Activated T-helper 2 cell treated with anti-CD3 and anti-CD28 coated beads, Interferon-gamma antibody, Interleukin-2, Interleukin-4, amounts not matched to agents 10 μg/mL and 5 μg/mL and 100 μg/mL, durations not matched to agents 14 hours and 24 hours and 36 hours (primary cell): ENCODE measurements at regions of chr1 and their contacts with region 1.

Region 1: DNA sequence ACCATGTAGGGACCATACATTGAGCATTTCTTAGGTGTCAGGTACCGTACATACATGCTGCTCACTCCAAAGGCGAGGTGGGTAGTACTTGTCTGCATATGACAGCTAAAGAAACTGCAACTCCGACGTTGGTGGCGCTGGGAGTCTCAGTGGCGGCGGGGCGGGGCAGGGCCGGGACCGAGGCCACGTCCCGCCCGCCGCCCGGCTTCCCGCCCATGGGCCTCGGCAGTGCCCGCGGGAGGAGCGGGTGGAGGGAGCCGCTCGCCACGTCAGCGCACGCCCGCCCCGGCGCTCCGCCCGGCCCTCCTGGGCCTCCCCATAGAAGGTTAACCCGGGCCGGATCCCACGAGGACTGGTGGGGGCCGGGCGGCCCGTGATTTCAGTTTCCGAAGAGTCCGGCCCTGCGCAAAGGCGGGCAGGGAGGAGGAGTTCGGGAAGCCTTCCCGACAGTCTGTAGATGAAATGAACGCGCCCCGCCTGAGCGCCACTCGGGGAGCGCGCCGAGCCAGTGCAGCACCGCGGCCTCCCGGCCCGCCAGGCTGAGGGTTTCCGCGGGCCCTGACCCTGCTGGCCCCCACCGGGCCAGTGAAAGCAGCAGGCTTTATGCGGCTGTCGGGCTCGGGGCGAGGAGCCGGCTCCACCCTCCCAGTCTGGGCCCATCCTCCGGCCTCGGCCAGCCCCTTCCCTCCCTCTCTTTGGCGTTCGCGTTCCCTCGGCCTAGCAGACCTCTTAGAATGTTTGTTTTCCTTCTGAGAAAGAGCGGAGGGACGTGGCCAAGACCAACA is 119.9 kb upstream of the JUN start:
- DNase-seq: peak; percentile 78
- H3K4me3 Mint-ChIP-seq: peak overlapping the region; percentile 71
- H3K27ac Mint-ChIP-seq: peak overlapping the region; percentile 79
- H3K4me1 Mint-ChIP-seq: peaks cover 27% of the 10 kb centered on the region
- H3K27me3 Mint-ChIP-seq: peaks cover 5% of the 10 kb centered on the region

Region 2: GRCh38 chr1:58739856-58740466 is 163.7 kb before region 1 on chr1:
- intact Hi-C with region 1: no loop called
- DNase-seq: no peak
- H3K4me3 Mint-ChIP-seq: no peak overlapping the region
- H3K27ac Mint-ChIP-seq: no peak overlapping the region
- H3K4me1 Mint-ChIP-seq: peaks cover 16% of the 10 kb centered on the region
- H3K27me3 Mint-ChIP-seq: peaks cover 4% of the 10 kb centered on the region

Region 3: DNA sequence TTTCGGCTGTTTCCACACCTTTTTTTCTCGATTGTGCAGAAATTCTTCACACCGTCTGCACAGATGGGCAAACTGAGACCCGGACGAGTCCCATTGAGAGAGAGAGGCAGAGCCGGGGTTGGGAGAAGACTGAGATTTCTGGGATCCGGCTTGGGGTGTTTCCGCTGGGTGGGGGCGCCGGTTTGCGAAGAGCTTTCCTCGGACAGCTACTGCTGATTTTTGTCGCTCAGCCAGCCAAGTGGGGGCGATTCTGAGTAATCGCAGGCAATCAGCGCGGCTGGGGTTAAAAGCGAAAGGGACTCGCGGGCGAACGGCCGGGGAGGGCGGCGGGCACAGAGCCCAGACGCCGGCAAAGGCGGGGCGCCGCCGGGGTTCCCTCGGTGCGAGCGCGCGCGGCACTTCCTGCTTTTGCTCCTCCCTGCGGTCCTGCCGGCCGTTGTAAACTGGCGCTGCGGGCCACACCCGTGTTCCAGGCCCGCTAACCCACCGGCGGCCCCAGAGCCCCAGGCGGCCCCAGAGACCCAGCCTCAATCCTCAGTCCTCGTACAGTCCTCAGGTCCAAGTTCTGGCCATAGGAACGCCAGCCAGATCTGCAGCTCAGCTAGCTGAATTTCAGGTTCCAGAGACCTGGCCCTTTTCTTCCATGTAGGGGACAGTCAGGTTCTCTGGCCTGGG is 87.5 kb before region 1 on chr1:
- intact Hi-C with region 1: loop called (anchors 2 kb)
- DNase-seq: peak; percentile 85
- H3K4me3 Mint-ChIP-seq: peak overlapping the region; percentile 76
- H3K27ac Mint-ChIP-seq: peak overlapping the region; percentile 73
- H3K4me1 Mint-ChIP-seq: peaks cover 43% of the 10 kb centered on the region
- H3K27me3 Mint-ChIP-seq: peaks cover 7% of the 10 kb centered on the region

Region 4: GRCh38 chr1:58857680-58858673 is 45.7 kb before region 1 on chr1:
- intact Hi-C with region 1: loop called (anchors 2 kb)
- DNase-seq: peak; percentile 17
- H3K4me3 Mint-ChIP-seq: no peak overlapping the region
- H3K27ac Mint-ChIP-seq: peak overlapping the region; percentile 83
- H3K4me1 Mint-ChIP-seq: peaks cover 31% of the 10 kb centered on the region
- H3K27me3 Mint-ChIP-seq: no peaks in the 10 kb centered on the region

Region 5: GRCh38 chr1:58922302-58923089 is 18.8 kb after region 1 on chr1:
- intact Hi-C with region 1: loop called (anchors 2 kb)
- DNase-seq: peak; percentile 54
- H3K4me3 Mint-ChIP-seq: no peak overlapping the region
- H3K27ac Mint-ChIP-seq: peak overlapping the region; percentile 59
- H3K4me1 Mint-ChIP-seq: peaks cover 18% of the 10 kb centered on the region
- H3K27me3 Mint-ChIP-seq: no peaks in the 10 kb centered on the region

Region 6: GRCh38 chr1:58968360-58968952 is 64.8 kb after region 1 on chr1:
- intact Hi-C with region 1: loop called (anchors 5 kb)
- DNase-seq: peak; percentile 43
- H3K4me3 Mint-ChIP-seq: peak overlapping the region; percentile 31
- H3K27ac Mint-ChIP-seq: peak overlapping the region; percentile 98
- H3K4me1 Mint-ChIP-seq: peaks cover 40% of the 10 kb centered on the region
- H3K27me3 Mint-ChIP-seq: no peaks in the 10 kb centered on the region

Region 7: GRCh38 chr1:59007820-59008598 is 104.3 kb after region 1 on chr1:
- intact Hi-C with region 1: loop called (anchors 5 kb)
- DNase-seq: no peak
- H3K4me3 Mint-ChIP-seq: no peak overlapping the region
- H3K27ac Mint-ChIP-seq: peak overlapping the region; percentile 85
- H3K4me1 Mint-ChIP-seq: peaks cover 55% of the 10 kb centered on the region
- H3K27me3 Mint-ChIP-seq: no peaks in the 10 kb centered on the region

Region 8: GRCh38 chr1:59143133-59143487 is 239.4 kb after region 1 on chr1:
- intact Hi-C with region 1: loop called (anchors 5 kb)
- DNase-seq: no peak
- H3K4me3 Mint-ChIP-seq: no peak overlapping the region
- H3K27ac Mint-ChIP-seq: peak overlapping the region; percentile 62
- H3K4me1 Mint-ChIP-seq: peaks cover 59% of the 10 kb centered on the region
- H3K27me3 Mint-ChIP-seq: no peaks in the 10 kb centered on the region